Adrenal gland (tissue), 19 donors: ENCODE measurements at regions of chr1 and their contacts with region 1.

Region 1: DNA sequence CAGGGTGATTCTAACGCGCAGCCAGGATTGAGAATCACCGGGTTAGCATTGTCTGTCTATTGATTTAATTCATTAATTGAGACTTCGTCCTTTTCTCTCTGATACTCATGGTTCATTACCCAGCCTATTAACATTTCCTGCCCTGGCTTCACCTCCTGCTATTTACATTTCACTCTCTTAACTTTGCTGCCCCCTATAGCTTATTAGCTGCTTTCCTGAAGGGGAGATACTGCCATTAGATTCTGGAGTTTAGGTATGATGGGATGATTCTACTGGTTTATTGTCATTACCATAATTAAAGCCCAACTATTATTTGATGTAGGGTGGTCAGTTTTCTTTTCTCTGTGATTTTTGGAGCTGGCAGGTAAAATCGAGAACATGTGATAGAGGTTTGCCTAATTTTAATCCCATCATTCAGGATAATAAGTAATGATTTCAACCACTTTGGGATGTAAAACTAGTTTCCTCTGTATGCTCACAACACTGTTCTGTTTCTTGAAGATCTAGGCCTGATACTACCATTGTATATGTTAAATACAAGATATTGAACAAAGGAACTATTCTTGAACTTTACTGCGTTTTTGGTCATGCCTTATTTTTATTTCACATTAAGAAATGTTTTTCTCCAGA is 6.4 kb downstream of the PPP2R5A start:
- DNase-seq: peak in 1 of 7 donors; percentile 10
- H3K4me3 ChIP-seq: no peak overlapping the region
- H3K27ac ChIP-seq: no peak overlapping the region
- H3K4me1 ChIP-seq: peaks cover 8 to 42% of the 10 kb centered on the region in 2 donors
- H3K27me3 ChIP-seq: no peaks in the 10 kb centered on the region
- CTCF ChIP-seq: peak in 4 of 6 experiments; percentile 41 to 52 (median 46)
- POLR2A ChIP-seq: no peak

Region 2: DNA sequence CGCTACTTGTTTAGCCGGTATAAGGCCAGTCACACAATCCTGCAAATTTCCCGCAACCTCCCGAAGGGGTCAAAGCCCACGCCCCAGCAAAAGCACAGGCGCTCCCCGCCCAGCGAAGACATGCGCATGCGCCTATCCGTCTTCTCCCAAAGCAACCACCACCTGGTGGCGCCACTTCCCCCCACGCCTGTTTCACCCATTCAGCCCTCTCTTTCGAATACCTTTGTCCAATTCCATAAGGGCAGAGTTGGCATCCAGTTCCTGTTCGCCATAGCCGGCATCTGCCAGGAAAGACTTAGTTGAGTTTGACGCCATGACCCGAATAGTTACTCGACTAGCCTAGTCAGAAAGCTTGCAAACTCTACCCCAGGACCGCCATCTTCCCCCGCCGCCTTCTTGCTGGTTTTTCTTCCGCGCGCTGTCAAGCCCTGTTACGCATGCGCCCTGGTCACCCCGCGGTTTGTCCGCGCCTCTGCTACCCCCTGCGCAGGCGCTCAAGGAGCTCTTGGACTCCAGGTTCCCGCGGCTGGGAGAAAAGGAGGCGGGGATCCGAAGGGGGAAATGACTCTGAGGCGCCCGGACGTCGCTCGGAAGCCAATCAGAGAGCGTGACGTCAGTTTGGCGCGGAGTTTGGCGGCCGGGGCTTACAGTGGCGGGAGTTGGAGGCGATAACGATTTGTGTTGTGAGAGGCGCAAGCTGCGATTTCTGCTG is 256.3 kb before region 1 on chr1 and contains the starts of genes DTL and INTS7:
- intact Hi-C with region 1: no loop called
- DNase-seq: peak; percentile 99
- H3K4me3 ChIP-seq: peak within 1 kb of the TSS in 3 of 4 donors; percentile 75 to 84 (median 80)
- H3K27ac ChIP-seq: peak within 1 kb of the TSS in 4 of 5 donors; percentile 53 to 93 (median 82)
- H3K4me1 ChIP-seq: peaks cover 22 to 35% of the 10 kb centered on the region in 2 donors
- H3K27me3 ChIP-seq: no peaks in the 10 kb centered on the region
- CTCF ChIP-seq: peak; percentile 85 to 99 (median 92)
- POLR2A ChIP-seq: peak in 1 of 2 donors; percentile 38
- total RNA-seq, gene DTL: 0.06 to 11.4 (median 0.68) TPM
- total RNA-seq, gene INTS7: 9.4 to 24.5 (median 12.8) TPM

Region 3: GRCh38 chr1:212070720-212071302 is 220.8 kb before region 1 on chr1:
- intact Hi-C with region 1: loop called in 1 of 2 experiments (anchors 10 kb)
- DNase-seq: no peak
- H3K4me3 ChIP-seq: no peak overlapping the region
- H3K27ac ChIP-seq: no peak overlapping the region
- H3K4me1 ChIP-seq: no peaks in the 10 kb centered on the region
- H3K27me3 ChIP-seq: no peaks in the 10 kb centered on the region
- CTCF ChIP-seq: peak; percentile 58 to 92 (median 78)
- POLR2A ChIP-seq: no peak

Region 4: DNA sequence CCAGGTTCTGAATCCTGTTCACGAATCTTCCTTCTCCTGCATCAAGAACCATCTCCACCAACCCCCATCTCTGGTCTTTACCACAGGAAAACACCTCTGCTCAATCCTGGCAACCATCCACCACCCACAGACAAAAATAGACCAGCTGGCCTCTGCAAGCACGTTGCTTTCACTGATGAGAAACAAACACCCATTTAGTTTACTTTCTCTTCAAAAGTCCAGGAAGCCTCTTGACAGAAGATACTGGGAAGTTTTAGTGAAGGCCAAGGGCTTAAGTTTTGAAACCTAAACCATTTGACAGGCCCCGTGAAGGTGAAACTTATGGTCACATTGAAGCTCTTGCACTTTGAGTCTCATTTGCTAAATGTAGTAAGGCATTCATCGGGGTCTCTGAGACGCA is 129.0 kb before region 1 on chr1:
- intact Hi-C with region 1: no loop called
- DNase-seq: peak; percentile 22 to 74 (median 42)
- H3K4me3 ChIP-seq: no peak overlapping the region
- H3K27ac ChIP-seq: no peak overlapping the region
- H3K4me1 ChIP-seq: peaks cover 6 to 7% of the 10 kb centered on the region in 2 donors
- H3K27me3 ChIP-seq: no peaks in the 10 kb centered on the region
- CTCF ChIP-seq: no peak
- POLR2A ChIP-seq: no peak

Region 5: GRCh38 chr1:212386029-212386428 is 94.4 kb after region 1 on chr1:
- intact Hi-C with region 1: no loop called
- DNase-seq: no peak
- H3K4me3 ChIP-seq: no peak overlapping the region
- H3K27ac ChIP-seq: no peak overlapping the region
- H3K4me1 ChIP-seq: no peaks in the 10 kb centered on the region
- H3K27me3 ChIP-seq: no peaks in the 10 kb centered on the region
- CTCF ChIP-seq: no peak
- POLR2A ChIP-seq: no peak